Common myeloid progenitor, CD34-positive (primary cell): ENCODE measurements at regions of chr12 and their contacts with region 1.

Region 1: DNA sequence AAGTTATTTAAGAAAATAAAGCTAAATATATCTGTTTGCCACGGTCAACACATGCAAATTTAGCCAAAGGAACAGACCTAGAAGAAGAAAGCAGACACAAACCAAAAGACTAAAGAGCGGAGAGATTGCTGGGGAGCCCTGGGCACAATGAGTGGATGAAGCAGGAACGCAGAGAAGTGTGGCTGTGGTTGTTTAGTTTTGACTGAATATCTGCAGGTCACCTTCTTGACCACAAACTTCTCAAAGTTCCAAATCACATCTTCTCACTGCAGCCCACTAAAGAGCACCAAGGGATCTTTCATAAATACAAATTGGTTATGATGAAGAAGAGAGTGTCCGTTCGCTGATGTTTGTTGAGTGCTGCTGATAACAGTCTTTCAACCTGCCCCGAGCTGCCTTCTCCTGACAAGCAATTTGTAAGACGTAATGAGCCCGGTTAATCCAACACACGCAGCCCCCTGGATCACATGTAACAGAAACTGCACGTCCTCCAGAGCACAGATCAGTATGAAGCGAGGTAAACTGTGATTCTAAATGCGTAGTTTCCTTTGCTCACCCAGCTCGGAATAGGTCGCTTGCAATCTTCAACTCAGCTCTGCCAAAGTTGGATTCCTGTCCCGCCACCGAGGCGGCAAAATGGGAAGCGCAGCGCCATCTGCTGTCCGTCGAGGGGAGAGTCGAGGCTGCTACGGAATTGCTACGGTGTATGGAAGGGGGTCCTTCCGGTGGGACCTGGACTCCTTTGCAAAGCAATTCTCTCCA is 120.8 kb downstream of the GXYLT1 start:
- DNase-seq: peak; percentile 74 to 86 (median 85)
- H3K4me3 ChIP-seq: peak overlapping the region; percentile 13 to 82 (median 61)
- H3K27ac ChIP-seq: no peak overlapping the region
- H3K4me1 ChIP-seq: peaks cover 10 to 28% (median 22%) of the 10 kb centered on the region in 4 experiments
- H3K27me3 ChIP-seq: no peaks in the 10 kb centered on the region

Region 2: DNA sequence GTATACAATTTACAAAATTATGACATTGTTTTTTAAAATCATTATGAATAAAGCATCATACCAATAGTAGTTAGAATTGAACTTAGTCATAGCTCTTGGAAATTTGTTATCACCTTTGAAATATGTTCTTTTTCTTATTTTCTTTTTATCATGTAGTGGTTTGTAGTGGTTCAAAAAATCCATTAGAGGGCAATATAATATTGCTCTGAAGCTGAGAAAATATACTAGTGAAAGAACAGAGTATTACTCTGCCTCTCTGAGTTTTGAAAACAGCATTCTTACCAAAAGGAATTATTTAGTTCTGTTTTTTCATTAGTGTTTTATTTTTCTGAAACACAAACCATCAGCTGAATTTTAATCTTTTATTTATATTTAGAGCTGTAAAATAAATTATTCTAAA is 759.6 kb before region 1 on chr12:
- CTCF ChIA-PET with region 1: interaction called, 10 read pairs
- POLR2A ChIA-PET with region 1: no interaction called
- DNase-seq: peak; percentile 10 to 56 (median 47)
- H3K4me3 ChIP-seq: no peak overlapping the region
- H3K27ac ChIP-seq: no peak overlapping the region
- H3K4me1 ChIP-seq: no peaks in the 10 kb centered on the region
- H3K27me3 ChIP-seq: no peaks in the 10 kb centered on the region

Region 3: GRCh38 chr12:41936333-41936732 is 87.6 kb before region 1 on chr12:
- CTCF ChIA-PET with region 1: interaction called, 12 read pairs
- POLR2A ChIA-PET with region 1: no interaction called
- DNase-seq: no peak
- H3K4me3 ChIP-seq: no peak overlapping the region
- H3K27ac ChIP-seq: no peak overlapping the region
- H3K4me1 ChIP-seq: peaks cover 0 to 18% (median 16%) of the 10 kb centered on the region in 4 experiments
- H3K27me3 ChIP-seq: no peaks in the 10 kb centered on the region

Region 4: GRCh38 chr12:42346403-42347002 is 322.6 kb after region 1 on chr12:
- CTCF ChIA-PET with region 1: no interaction called
- POLR2A ChIA-PET with region 1: no interaction called
- DNase-seq: no peak
- H3K4me3 ChIP-seq: no peak overlapping the region
- H3K27ac ChIP-seq: no peak overlapping the region
- H3K4me1 ChIP-seq: no peaks in the 10 kb centered on the region
- H3K27me3 ChIP-seq: no peaks in the 10 kb centered on the region